Activated naive CD4-positive, alpha-beta T cell treated with anti-CD3 and anti-CD28 coated beads for 36 hours (primary cell): ENCODE measurements at regions of chr17 and their contacts with region 1.

Region 1: DNA sequence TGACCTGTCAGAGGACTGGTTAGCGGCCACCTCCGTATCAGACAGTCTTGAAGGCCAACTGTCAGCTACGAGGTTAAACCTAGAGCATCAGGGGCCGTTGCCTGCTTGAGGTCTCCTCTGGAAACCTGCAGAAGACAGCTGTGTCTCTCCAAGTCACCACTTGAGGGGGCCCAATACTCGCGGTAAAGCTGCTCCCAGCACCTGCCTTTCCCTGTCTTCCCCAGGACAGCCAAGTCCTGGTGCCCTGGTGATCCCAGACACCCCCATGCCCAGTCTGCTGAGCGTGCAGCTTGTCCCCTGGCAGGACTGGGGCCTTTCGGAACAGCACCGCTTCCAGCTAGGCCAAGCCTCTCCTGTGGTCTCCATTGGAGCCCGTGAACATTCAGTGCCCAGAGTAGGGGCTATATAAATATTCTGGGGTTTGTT is 80.1 kb downstream of the DNAH17 start:
- DNase-seq: peak; percentile 76
- H3K4me3 Mint-ChIP-seq: no peak overlapping the region
- H3K27ac Mint-ChIP-seq: no peak overlapping the region
- H3K4me1 Mint-ChIP-seq: no peaks in the 10 kb centered on the region
- H3K27me3 Mint-ChIP-seq: no peaks in the 10 kb centered on the region

Region 2: DNA sequence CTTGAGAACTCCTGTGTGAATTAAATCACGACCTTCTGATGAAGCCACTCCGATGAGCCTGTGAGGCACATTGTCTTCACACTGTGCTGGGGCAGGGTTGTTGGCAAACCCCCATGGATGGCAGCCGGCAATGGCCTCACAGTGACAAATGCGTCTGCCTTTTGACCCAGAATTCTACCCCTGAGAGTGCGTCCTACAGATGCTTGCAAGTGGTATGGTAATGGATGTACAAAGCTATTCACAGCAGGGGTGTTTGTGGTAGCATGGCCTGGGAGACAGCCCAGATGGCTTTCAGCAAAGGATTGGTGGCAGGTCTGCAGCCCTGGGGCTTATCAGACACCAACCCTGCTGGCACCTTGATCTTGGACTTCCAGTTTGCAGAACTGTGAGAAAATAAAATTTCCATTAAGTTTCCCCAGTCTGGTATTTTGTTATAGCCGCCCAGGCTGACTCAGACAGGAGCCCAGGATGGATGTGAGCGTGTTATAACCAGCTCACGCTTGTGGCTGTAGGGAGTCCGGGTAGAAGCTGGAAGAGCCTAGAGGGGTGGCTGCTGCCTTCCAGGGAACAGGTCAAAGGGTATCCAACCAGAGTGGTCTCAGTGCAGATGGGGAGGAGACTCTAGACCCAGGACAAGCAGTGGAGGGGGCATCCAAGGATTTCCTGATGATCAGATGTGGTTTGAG is 299.8 kb before region 1 on chr17:
- CTCF ChIA-PET with region 1: no interaction called
- intact Hi-C with region 1: no loop called
- DNase-seq: no peak
- H3K4me3 Mint-ChIP-seq: no peak overlapping the region
- H3K27ac Mint-ChIP-seq: no peak overlapping the region
- H3K4me1 Mint-ChIP-seq: no peaks in the 10 kb centered on the region
- H3K27me3 Mint-ChIP-seq: no peaks in the 10 kb centered on the region

Region 3: GRCh38 chr17:78798695-78799559 is 301.8 kb after region 1 on chr17:
- CTCF ChIA-PET with region 1: no interaction called
- intact Hi-C with region 1: loop called (anchors 5 kb)
- DNase-seq: peak; percentile 38
- H3K4me3 Mint-ChIP-seq: no peak overlapping the region
- H3K27ac Mint-ChIP-seq: peak overlapping the region; percentile 80
- H3K4me1 Mint-ChIP-seq: peaks cover 33% of the 10 kb centered on the region
- H3K27me3 Mint-ChIP-seq: no peaks in the 10 kb centered on the region

Region 4: DNA sequence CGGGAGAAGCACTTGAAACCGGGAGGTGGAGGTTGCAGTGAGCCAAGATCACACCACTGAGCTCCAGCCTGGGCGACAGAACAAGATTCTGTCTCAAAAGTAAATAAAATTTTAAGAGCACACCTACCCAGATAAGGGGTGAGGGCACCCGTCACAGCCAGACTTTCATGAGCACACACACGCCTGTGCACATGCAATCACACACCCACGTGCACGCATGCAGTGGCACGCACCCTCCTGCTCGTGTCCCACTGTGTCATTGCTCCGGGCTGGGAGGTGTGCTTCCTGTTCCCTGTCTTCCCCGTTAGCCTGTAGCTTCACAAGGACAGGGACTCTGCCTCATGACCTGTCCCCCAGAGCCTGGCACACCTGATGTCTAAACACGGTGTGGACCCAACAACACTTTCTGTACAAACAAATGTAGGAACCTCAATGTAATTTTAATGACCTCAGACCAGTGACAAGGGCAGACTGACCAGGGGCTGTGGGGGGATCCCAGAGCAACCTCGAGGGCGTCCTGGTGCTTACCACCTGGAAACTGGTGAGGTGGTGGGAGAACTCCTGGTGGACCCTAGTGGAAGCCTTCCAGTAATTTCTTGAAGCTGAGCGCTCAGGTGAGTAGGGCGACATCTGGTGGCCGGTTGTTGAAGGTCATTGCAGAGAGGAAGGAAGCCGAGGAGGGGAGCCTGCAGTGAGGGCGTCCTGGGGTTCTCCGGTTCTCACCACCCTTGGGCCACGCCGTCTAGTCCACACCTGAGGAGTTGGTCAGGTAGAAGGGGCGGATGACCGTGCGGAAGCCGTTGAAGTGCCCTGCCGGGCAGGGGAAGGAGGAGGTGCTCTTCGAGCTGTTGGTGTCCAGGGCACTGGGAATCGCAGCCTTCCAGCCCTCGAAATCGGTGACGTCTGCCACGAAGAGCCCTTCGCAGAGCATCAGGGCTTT is 474.0 kb after region 1 on chr17:
- CTCF ChIA-PET with region 1: no interaction called
- intact Hi-C with region 1: loop called (anchors 2 kb)
- DNase-seq: peak; percentile 89
- H3K4me3 Mint-ChIP-seq: peak overlapping the region; percentile 32
- H3K27ac Mint-ChIP-seq: peak overlapping the region; percentile 67
- H3K4me1 Mint-ChIP-seq: peaks cover 11% of the 10 kb centered on the region
- H3K27me3 Mint-ChIP-seq: no peaks in the 10 kb centered on the region